CD4-positive, alpha-beta memory T cell (primary cell): ENCODE measurements at regions of chr2 and their contacts with region 1.

Region 1: DNA sequence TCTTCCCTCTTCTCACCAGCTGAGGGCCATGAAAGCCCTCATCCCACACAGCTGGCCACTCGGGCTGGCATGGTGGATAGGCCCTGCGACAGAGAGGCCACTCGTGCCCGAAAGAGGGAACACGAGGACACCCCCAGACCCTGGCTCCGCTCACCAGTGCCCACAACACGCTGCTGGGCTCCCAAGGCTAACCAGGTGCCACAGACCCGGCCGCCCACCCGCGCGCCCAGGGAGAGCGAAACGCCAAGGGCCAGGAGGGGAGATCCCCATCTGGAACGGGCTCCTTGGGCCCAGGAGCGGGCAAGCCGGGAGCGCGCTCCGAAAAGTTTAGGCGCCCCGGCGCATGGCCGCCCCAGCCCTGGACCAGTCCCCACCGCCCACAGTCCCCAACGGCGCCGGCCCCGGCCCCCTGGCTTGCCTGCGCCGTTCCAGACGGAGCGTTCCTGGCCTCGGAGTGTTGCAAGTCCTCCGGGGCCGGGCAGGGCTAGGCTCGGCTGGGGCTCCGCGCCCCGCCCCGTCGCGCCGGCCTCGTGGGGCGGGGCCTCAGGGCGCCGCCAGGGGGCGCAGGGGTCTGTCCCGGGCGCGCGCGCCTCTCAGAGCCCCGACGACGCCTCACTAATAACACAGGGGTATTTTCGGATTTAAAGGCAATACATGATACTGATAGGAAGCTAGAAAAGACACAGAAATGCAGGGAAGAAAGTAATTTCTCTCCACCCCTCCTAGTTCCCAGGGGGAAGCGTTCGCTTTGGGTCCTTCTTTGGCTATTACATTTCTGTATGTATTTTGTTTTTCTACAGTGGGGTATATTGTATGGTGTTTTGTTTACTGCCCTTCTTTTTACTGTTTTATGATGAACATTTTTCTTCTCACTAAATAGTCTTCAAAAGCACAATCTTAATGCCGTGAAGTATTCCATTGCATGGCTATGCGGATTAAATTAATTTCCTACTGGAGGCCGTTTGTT is at the start of gene TMBIM1:
- DNase-seq: peak; percentile 73 to 86 (median 83)
- H3K4me3 ChIP-seq: peak within 1 kb of the TSS; percentile 74 to 78
- H3K4me3 Mint-ChIP-seq: peak within 1 kb of the TSS; percentile 90 to 97 (median 96)
- H3K27ac ChIP-seq: peak within 1 kb of the TSS; percentile 94
- H3K27ac Mint-ChIP-seq: peak within 1 kb of the TSS; percentile 98 to 100 (median 99)
- H3K4me1 ChIP-seq: peaks cover 56% of the 10 kb centered on the region
- H3K4me1 Mint-ChIP-seq: peaks cover 32 to 75% (median 51%) of the 10 kb centered on the region in 4 donors
- H3K27me3 ChIP-seq: no peaks in the 10 kb centered on the region
- H3K27me3 Mint-ChIP-seq: no peaks in the 10 kb centered on the region
- total RNA-seq, gene TMBIM1: 140 to 144 TPM

Region 2: GRCh38 chr2:217182926-217183325 is 1109.4 kb before region 1 on chr2:
- CTCF ChIA-PET with region 1: no interaction called
- POLR2A ChIA-PET with region 1: no interaction called
- intact Hi-C with region 1: no loop called
- DNase-seq: no peak
- H3K4me3 ChIP-seq: no peak overlapping the region
- H3K4me3 Mint-ChIP-seq: no peak overlapping the region
- H3K27ac ChIP-seq: no peak overlapping the region
- H3K27ac Mint-ChIP-seq: no peak overlapping the region
- H3K4me1 ChIP-seq: no peaks in the 10 kb centered on the region
- H3K4me1 Mint-ChIP-seq: no peaks in the 10 kb centered on the region
- H3K27me3 ChIP-seq: no peaks in the 10 kb centered on the region
- H3K27me3 Mint-ChIP-seq: no peaks in the 10 kb centered on the region

Region 3: GRCh38 chr2:217816396-217816869 is 475.9 kb before region 1 on chr2:
- CTCF ChIA-PET with region 1: no interaction called
- POLR2A ChIA-PET with region 1: no interaction called
- intact Hi-C with region 1: no loop called
- DNase-seq: no peak
- H3K4me3 ChIP-seq: no peak overlapping the region
- H3K4me3 Mint-ChIP-seq: no peak overlapping the region
- H3K27ac ChIP-seq: no peak overlapping the region
- H3K27ac Mint-ChIP-seq: no peak overlapping the region
- H3K4me1 ChIP-seq: no peaks in the 10 kb centered on the region
- H3K4me1 Mint-ChIP-seq: no peaks in the 10 kb centered on the region
- H3K27me3 ChIP-seq: no peaks in the 10 kb centered on the region
- H3K27me3 Mint-ChIP-seq: peaks cover 0 to 4% of the 10 kb centered on the region in 2 donors

Region 4: GRCh38 chr2:218216674-218217359 is 75.5 kb before region 1 on chr2 and contains the start of gene ARPC2:
- CTCF ChIA-PET with region 1: interaction called, 4 read pairs
- POLR2A ChIA-PET with region 1: interaction called, 7 read pairs
- intact Hi-C with region 1: loop called (anchors 1 kb)
- DNase-seq: peak; percentile 92 to 97 (median 96)
- H3K4me3 ChIP-seq: peak within 1 kb of the TSS; percentile 85 to 97
- H3K4me3 Mint-ChIP-seq: peak within 1 kb of the TSS; percentile 89 to 98 (median 96)
- H3K27ac ChIP-seq: peak within 1 kb of the TSS; percentile 93
- H3K27ac Mint-ChIP-seq: peak within 1 kb of the TSS; percentile 93 to 99 (median 97)
- H3K4me1 ChIP-seq: peaks cover 39% of the 10 kb centered on the region
- H3K4me1 Mint-ChIP-seq: peaks cover 28 to 52% (median 38%) of the 10 kb centered on the region in 4 donors
- H3K27me3 ChIP-seq: no peaks in the 10 kb centered on the region
- H3K27me3 Mint-ChIP-seq: no peaks in the 10 kb centered on the region
- total RNA-seq, gene ARPC2: 412 to 414 TPM

Region 5: GRCh38 chr2:218276986-218277755 is 15.2 kb before region 1 on chr2:
- CTCF ChIA-PET with region 1: interaction called, 446 read pairs
- POLR2A ChIA-PET with region 1: interaction called, 188 read pairs
- intact Hi-C with region 1: no loop called
- DNase-seq: no peak
- H3K4me3 ChIP-seq: no peak overlapping the region
- H3K4me3 Mint-ChIP-seq: no peak overlapping the region
- H3K27ac ChIP-seq: peak overlapping the region; percentile 11
- H3K27ac Mint-ChIP-seq: peak overlapping the region; percentile 59 to 82 (median 68)
- H3K4me1 ChIP-seq: peaks cover 13% of the 10 kb centered on the region
- H3K4me1 Mint-ChIP-seq: peaks cover 11 to 31% (median 20%) of the 10 kb centered on the region in 4 donors
- H3K27me3 ChIP-seq: no peaks in the 10 kb centered on the region
- H3K27me3 Mint-ChIP-seq: no peaks in the 10 kb centered on the region

Region 6: GRCh38 chr2:218319813-218320365 is 27.6 kb after region 1 on chr2:
- CTCF ChIA-PET with region 1: interaction called, 5 read pairs
- POLR2A ChIA-PET with region 1: interaction called, 11 read pairs
- intact Hi-C with region 1: no loop called
- DNase-seq: no peak
- H3K4me3 ChIP-seq: no peak overlapping the region
- H3K4me3 Mint-ChIP-seq: peak overlapping the region in 1 of 8 donors; percentile 46
- H3K27ac ChIP-seq: no peak overlapping the region
- H3K27ac Mint-ChIP-seq: peak overlapping the region in 2 of 7 donors; percentile 8 to 80
- H3K4me1 ChIP-seq: peaks cover 48% of the 10 kb centered on the region
- H3K4me1 Mint-ChIP-seq: peaks cover 33 to 69% (median 50%) of the 10 kb centered on the region in 4 donors
- H3K27me3 ChIP-seq: no peaks in the 10 kb centered on the region
- H3K27me3 Mint-ChIP-seq: no peaks in the 10 kb centered on the region

Region 7: DNA sequence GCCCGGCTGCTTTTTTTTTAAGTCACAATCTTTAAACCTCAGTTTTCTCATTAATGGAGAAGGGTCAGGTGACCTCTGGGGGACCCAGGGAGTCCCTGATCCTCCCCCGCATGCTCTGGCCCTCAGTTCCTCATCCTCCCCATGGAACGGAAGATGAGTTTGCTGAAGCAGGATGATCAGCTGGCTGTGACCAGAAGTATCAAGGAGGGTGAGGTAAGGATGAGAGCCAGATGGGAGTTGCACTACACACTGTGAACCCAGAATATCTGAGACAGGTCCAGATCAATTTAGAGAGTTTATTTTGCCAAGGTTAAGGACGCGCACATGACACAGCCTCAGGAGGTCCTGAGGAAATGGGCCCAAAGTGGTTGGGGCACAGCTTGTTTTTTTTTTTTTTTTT is 68.1 kb after region 1 on chr2:
- CTCF ChIA-PET with region 1: interaction called, 151 read pairs
- POLR2A ChIA-PET with region 1: interaction called, 14 read pairs
- intact Hi-C with region 1: loop called (anchors 1 kb)
- DNase-seq: no peak
- H3K4me3 ChIP-seq: no peak overlapping the region
- H3K4me3 Mint-ChIP-seq: no peak overlapping the region
- H3K27ac ChIP-seq: no peak overlapping the region
- H3K27ac Mint-ChIP-seq: no peak overlapping the region
- H3K4me1 ChIP-seq: peaks cover 6% of the 10 kb centered on the region
- H3K4me1 Mint-ChIP-seq: peaks cover 0 to 4% (median 2%) of the 10 kb centered on the region in 4 donors
- H3K27me3 ChIP-seq: no peaks in the 10 kb centered on the region
- H3K27me3 Mint-ChIP-seq: no peaks in the 10 kb centered on the region

Region 8: GRCh38 chr2:218367415-218368153 is 75.3 kb after region 1 on chr2:
- CTCF ChIA-PET with region 1: interaction called, 4 read pairs
- POLR2A ChIA-PET with region 1: interaction called, 10 read pairs
- intact Hi-C with region 1: no loop called
- DNase-seq: peak; percentile 64 to 74 (median 71)
- H3K4me3 ChIP-seq: peak overlapping the region; percentile 42 to 60
- H3K4me3 Mint-ChIP-seq: peak overlapping the region; percentile 74 to 89 (median 82)
- H3K27ac ChIP-seq: peak overlapping the region; percentile 42
- H3K27ac Mint-ChIP-seq: peak overlapping the region; percentile 84 to 96 (median 90)
- H3K4me1 ChIP-seq: peaks cover 28% of the 10 kb centered on the region
- H3K4me1 Mint-ChIP-seq: peaks cover 13 to 33% (median 25%) of the 10 kb centered on the region in 4 donors
- H3K27me3 ChIP-seq: no peaks in the 10 kb centered on the region
- H3K27me3 Mint-ChIP-seq: no peaks in the 10 kb centered on the region

Region 9: GRCh38 chr2:218466016-218466521 is 173.7 kb after region 1 on chr2:
- CTCF ChIA-PET with region 1: interaction called, 11 read pairs
- POLR2A ChIA-PET with region 1: no interaction called
- intact Hi-C with region 1: no loop called
- DNase-seq: peak in 4 of 5 donors; percentile 11 to 15 (median 14)
- H3K4me3 ChIP-seq: no peak overlapping the region
- H3K4me3 Mint-ChIP-seq: no peak overlapping the region
- H3K27ac ChIP-seq: no peak overlapping the region
- H3K27ac Mint-ChIP-seq: peak overlapping the region in 6 of 7 donors; percentile 20 to 78 (median 47)
- H3K4me1 ChIP-seq: peaks cover 7% of the 10 kb centered on the region
- H3K4me1 Mint-ChIP-seq: peaks cover 6 to 12% (median 8%) of the 10 kb centered on the region in 4 donors
- H3K27me3 ChIP-seq: no peaks in the 10 kb centered on the region
- H3K27me3 Mint-ChIP-seq: no peaks in the 10 kb centered on the region

Region 10: DNA sequence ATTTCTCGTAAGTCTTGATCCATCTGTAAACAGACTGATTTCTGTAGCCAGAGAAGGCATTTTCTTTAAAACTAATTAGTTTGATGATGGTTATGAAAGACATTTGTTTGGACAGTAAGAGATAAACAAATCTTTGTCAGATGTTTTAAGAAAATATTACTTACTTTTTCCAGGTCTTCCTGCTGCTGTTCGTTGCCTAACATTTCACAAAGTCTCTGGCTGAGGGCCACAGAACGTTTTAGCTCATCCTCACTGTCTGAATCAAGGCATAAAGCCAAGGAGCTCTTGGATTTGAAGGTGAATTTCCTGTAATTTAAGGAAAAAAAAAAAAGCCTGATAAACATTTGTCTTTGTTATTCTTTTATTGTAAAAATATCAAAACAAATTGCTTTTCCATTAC is 184.3 kb after region 1 on chr2:
- CTCF ChIA-PET with region 1: no interaction called
- POLR2A ChIA-PET with region 1: no interaction called
- intact Hi-C with region 1: no loop called
- DNase-seq: no peak
- H3K4me3 ChIP-seq: no peak overlapping the region
- H3K4me3 Mint-ChIP-seq: no peak overlapping the region
- H3K27ac ChIP-seq: no peak overlapping the region
- H3K27ac Mint-ChIP-seq: no peak overlapping the region
- H3K4me1 ChIP-seq: no peaks in the 10 kb centered on the region
- H3K4me1 Mint-ChIP-seq: peaks cover 0 to 2% (median 0%) of the 10 kb centered on the region in 4 donors
- H3K27me3 ChIP-seq: no peaks in the 10 kb centered on the region
- H3K27me3 Mint-ChIP-seq: no peaks in the 10 kb centered on the region

Region 11: DNA sequence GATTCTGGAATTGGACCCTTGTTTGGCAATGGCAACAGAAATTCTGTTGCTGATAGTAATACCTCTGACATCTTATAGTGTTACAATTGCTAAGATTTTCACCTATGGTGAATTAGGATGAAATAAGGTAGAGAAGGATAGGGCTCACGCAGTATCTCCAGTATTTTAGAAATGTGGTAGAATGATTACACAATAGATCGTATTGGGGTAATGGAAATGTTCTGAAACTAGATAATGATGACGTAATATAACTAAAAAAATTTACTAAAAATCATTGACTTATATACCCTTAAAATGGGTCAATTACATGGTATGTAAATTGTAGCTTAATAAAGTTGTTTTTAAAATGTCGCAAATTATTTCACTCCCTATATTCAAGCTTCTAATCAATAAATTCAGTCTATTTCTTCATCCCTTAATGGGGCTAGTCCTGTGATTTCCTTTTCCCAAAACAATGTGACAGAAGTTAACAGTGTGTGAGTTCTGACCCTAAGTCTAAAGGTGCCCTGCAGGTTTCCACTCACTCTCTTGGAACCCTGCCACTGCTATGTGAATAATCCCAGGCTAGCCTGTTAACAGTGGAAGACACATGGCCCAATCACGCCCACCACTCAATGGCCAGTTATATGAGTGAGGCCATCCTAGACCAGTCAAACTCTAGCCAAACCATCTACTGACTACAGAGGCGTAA is 244.6 kb after region 1 on chr2:
- CTCF ChIA-PET with region 1: no interaction called
- POLR2A ChIA-PET with region 1: no interaction called
- intact Hi-C with region 1: no loop called
- DNase-seq: no peak
- H3K4me3 ChIP-seq: no peak overlapping the region
- H3K4me3 Mint-ChIP-seq: no peak overlapping the region
- H3K27ac ChIP-seq: no peak overlapping the region
- H3K27ac Mint-ChIP-seq: peak overlapping the region in 1 of 7 donors; percentile 6
- H3K4me1 ChIP-seq: no peaks in the 10 kb centered on the region
- H3K4me1 Mint-ChIP-seq: peaks cover 0 to 4% (median 2%) of the 10 kb centered on the region in 4 donors
- H3K27me3 ChIP-seq: no peaks in the 10 kb centered on the region
- H3K27me3 Mint-ChIP-seq: no peaks in the 10 kb centered on the region